ENCODE measurements at regions of chr1 and their contacts with region 1.

Region 1: DNA sequence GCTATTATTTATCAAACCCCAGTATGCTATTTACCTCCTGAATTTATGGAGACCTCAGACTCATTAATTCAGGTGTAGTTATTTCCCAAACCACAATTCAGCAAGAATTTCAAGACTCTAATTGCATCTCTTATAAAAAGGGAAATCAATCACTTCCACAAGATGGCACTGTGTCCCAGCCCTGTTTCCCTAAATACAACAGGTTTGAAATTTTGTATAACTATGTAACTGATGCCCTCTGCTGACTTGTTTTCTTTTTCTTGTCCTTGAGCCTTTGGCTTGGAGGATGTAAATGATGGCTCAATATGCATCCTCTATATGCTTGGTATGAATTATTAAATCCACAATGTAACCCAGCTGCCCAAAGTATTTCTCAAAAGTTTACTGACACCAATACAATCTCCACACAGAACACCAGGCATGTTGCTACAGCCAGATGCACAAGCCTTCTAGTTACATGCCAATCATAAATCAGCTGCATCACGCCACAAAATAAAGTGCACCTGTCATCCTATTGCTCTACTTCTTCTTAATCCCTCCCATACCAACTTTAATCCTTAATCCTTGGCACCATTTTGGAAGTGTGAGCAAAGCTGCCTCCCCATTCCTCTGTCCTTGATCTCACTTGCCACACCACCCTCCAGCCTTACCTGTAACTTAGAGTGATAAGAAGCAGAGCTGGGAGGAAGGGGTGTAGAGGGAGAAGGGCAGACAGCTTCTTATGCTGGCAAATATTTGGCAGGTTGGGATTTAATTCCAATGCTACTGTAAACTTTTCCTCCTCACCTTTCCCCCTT is 9.0 kb downstream of the C1orf105 start:
- DNase-seq: peak; percentile 81 to 84 (median 81)
- H3K4me3 ChIP-seq: no peak overlapping the region
- H3K27ac ChIP-seq: no peak overlapping the region
- H3K4me1 ChIP-seq: peaks cover 0 to 7% (median 5%) of the 10 kb centered on the region in 4 experiments
- H3K27me3 ChIP-seq: no peaks in the 10 kb centered on the region

Region 2: GRCh38 chr1:172380441-172381244 is 48.9 kb before region 1 on chr1:
- CTCF ChIA-PET with region 1: no interaction called
- POLR2A ChIA-PET with region 1: no interaction called
- DNase-seq: peak; percentile 32 to 76 (median 66)
- H3K4me3 ChIP-seq: peak overlapping the region in 5 of 7 experiments; percentile 8 to 60 (median 29)
- H3K27ac ChIP-seq: peak overlapping the region; percentile 44 to 55
- H3K4me1 ChIP-seq: peaks cover 10 to 27% (median 20%) of the 10 kb centered on the region in 4 experiments
- H3K27me3 ChIP-seq: no peaks in the 10 kb centered on the region

Region 3: DNA sequence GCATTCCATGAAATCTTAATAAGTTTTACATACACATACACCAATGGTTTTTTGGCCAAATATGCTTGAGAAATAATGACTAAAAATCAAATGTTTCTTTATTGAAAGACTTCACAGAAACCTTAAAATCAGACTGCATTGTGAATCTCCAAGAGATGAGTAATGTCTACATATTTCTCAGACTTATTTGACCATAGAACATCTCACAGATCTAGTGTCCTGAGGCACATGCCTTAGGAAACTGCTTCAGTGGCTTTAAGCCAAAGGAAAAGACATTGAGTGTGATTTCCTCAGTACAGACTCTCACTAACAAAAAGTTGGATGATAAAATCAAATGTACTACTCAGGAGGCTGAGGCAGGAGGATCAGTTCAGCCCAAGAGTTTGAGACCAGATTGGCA is 15.2 kb before region 1 on chr1:
- CTCF ChIA-PET with region 1: interaction called, 16 read pairs
- POLR2A ChIA-PET with region 1: no interaction called
- DNase-seq: no peak
- H3K4me3 ChIP-seq: no peak overlapping the region
- H3K27ac ChIP-seq: no peak overlapping the region
- H3K4me1 ChIP-seq: peaks cover 0 to 2% (median 0%) of the 10 kb centered on the region in 4 experiments
- H3K27me3 ChIP-seq: no peaks in the 10 kb centered on the region

Region 4: DNA sequence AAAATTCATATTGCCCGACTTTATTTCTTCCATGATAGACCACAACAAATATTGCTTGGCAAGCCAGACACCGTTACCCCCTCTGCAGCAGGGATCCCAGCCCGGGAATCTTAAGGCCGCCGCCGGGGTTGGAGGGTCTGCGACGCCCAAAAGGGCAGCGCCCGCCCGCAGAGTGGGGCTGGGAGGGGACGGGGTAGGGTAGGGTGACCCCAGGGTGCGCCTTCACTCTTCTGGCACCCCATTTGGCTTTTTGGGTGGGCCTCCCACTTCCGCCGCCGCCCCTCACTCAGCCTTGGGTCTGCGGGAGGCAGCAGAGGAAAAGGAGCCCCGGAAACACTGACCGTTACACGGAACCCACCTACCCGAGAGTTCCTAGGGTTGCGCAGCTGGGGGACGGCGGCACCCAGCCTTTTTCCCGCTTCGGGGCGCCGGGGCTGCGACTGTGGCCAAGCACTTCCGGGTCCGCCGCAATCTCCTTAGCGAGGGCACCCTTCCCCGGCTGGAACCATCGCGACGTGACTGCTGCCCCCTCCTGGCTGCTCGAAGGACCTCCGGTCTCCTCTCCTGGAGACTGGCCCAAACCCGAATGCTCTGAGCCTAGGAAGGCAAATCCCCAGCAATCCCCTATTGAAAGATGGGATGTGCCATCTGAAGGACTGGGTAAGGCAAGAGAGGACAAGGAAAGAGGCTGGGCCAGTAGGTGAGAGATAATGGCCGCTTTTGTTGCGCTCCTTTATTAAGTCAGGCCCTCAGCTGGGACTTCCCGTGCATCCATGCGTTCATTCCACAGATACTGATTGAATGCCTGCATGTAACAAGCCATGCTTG is 14.3 kb after region 1 on chr1 and contains the start of gene PIGC:
- CTCF ChIA-PET with region 1: interaction called, 18 read pairs
- POLR2A ChIA-PET with region 1: no interaction called
- DNase-seq: peak; percentile 88 to 93 (median 92)
- H3K4me3 ChIP-seq: peak within 1 kb of the TSS; percentile 80 to 92 (median 89)
- H3K27ac ChIP-seq: peak within 1 kb of the TSS; percentile 47 to 81
- H3K4me1 ChIP-seq: peaks cover 5 to 18% (median 10%) of the 10 kb centered on the region in 4 experiments
- H3K27me3 ChIP-seq: no peaks in the 10 kb centered on the region

Region 5: GRCh38 chr1:172585348-172585747 is 155.8 kb after region 1 on chr1:
- CTCF ChIA-PET with region 1: no interaction called
- POLR2A ChIA-PET with region 1: no interaction called
- DNase-seq: no peak
- H3K4me3 ChIP-seq: no peak overlapping the region
- H3K27ac ChIP-seq: no peak overlapping the region
- H3K4me1 ChIP-seq: peaks cover 0 to 7% (median 1%) of the 10 kb centered on the region in 4 experiments
- H3K27me3 ChIP-seq: no peaks in the 10 kb centered on the region